Mammary epithelial cell (primary cell): ENCODE measurements at regions of chr4 and their contacts with region 1.

Region 1: DNA sequence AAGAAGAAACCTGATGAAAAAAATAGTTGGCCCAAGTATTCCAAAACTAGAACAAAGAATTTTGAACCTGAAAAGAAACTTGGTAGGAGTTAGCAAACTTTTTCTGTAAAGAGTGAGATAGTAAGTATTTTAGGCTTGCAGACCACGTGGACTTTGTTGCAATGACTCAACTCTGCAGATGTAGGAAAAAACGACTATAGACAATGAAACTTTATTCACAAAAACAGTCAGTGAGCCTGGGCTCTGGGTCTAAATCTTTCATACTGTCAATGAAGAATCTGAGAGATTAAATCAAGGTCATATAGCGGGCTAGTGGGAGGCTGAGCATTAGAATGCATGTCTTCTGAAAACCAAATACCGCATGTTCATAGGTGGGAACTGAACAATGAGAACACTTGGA is 23.0 kb downstream of the SH3D19 start:
- DNase-seq: no peak
- H3K4me3 ChIP-seq: no peak overlapping the region
- H3K27ac ChIP-seq: no peak overlapping the region
- H3K4me1 ChIP-seq: peaks cover 14% of the 10 kb centered on the region
- H3K27me3 ChIP-seq: no peaks in the 10 kb centered on the region
- CTCF ChIP-seq: no peak

Region 2: GRCh38 chr4:150262611-150263010 is 1039.8 kb before region 1 on chr4:
- CTCF ChIA-PET with region 1: interaction called, 25 read pairs
- dilution Hi-C with region 1: no loop called
- in situ Hi-C with region 1: no loop called
- intact Hi-C with region 1: no loop called
- DNase-seq: no peak
- H3K4me3 ChIP-seq: no peak overlapping the region
- H3K27ac ChIP-seq: no peak overlapping the region
- H3K4me1 ChIP-seq: peaks cover 23% of the 10 kb centered on the region
- H3K27me3 ChIP-seq: no peaks in the 10 kb centered on the region
- CTCF ChIP-seq: no peak